Activated T-helper 2 cell treated with anti-CD3 and anti-CD28 coated beads, Interferon-gamma antibody, Interleukin-2, Interleukin-4, amounts not matched to agents 10 μg/mL and 5 μg/mL and 100 μg/mL, durations not matched to agents 14 hours and 24 hours and 36 hours (primary cell): ENCODE measurements at regions of chr13 and their contacts with region 1.

Region 1: DNA sequence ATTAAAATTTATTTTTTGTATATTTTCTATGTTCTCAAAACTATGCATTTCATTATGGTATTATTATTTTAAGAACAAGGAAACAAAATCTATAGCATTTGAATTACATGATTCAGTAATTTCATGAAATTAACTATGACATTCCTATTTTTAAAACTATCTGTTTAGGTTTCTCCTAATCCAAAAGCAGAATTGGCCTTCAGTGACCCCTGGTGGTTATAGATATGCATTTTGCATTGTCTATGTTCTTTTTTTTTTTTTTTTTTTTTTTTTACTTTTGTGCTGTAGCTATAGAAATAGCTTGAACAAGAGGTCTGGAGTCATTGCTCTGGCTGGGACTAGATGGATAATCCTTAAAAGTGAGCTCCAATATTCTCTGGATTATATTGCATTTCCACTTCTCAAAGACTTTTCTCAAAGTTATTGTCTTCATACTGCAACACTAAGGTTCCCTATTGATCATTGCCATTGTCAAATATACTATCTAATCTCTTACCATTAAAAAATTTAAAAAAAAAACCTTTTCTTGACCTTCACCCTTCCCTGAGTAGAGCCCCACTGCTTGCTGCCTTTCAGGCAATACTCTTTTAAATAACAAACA is 15.9 kb upstream of the DNAJC3 start:
- DNase-seq: no peak
- H3K4me3 Mint-ChIP-seq: no peak overlapping the region
- H3K27ac Mint-ChIP-seq: no peak overlapping the region
- H3K4me1 Mint-ChIP-seq: no peaks in the 10 kb centered on the region
- H3K27me3 Mint-ChIP-seq: peaks cover 23% of the 10 kb centered on the region

Region 2: DNA sequence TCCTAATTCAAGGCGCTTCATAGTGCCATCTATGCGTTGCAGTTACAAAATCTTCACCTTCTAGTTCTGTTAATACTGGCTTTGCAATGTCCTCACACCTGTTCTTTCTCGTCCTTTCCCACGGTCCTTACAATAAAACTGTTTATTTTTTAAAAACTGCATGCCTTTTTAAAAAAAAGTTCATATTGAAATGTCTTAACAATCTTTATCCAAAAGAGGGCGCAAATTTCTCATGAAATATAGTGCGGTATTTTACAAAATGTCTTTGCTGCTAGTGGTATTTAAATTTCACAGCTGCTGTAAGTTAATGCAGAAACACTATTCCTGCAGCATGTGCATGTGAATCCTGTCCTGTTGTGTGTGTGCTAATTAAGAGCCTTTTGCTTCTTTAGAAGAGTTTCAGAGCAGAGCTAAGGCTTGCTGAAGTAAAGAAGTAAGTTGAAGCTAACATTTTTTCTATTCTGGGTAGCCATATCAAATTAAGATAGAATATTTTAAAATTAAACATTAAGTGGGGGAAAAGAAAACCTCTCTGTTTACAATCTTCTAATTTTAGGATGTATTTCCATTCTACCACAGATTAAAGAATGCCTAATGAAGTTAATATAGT is 124.3 kb before region 1 on chr13:
- intact Hi-C with region 1: loop called (anchors 10 kb)
- DNase-seq: no peak
- H3K4me3 Mint-ChIP-seq: no peak overlapping the region
- H3K27ac Mint-ChIP-seq: no peak overlapping the region
- H3K4me1 Mint-ChIP-seq: peaks cover 8% of the 10 kb centered on the region
- H3K27me3 Mint-ChIP-seq: peaks cover 10% of the 10 kb centered on the region